ENCODE measurements at regions of chr2 and their contacts with region 1.

Region 1: DNA sequence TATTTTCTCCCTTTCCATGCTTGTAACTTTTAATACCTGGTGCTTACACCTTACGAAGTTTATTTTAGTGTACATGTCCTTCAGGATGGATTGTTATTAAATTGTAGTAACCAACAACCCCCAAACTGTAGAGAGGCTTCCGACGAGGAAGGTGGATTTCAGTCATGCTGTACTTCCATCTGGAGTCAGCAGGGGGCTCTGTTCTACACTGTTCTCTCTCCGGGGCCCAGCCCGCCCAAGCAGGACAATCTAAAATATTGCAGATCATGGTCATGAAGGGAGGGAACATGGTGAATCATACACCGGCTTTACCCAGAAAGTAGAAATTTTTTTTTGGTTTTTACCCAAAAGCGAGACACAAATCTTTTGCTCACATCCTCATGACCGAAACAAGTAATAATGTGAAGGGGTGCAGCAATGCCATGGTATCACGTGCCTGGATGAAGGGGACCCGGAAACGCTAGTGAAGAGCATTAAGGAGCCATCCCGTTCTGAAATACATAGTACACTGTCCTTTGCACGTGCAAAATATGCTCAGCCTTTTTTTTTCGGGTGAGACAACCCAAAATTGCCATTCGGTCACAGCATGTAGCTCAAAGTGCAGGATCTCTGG is 884.8 kb downstream of the EPHA4 start:
- DNase-seq: peak; percentile 37 to 78
- H3K4me3 ChIP-seq: no peak overlapping the region
- H3K4me1 ChIP-seq: no peaks in the 10 kb centered on the region; the same call in 1 of the 2 replicates
- H3K27me3 ChIP-seq: peaks cover 10% of the 10 kb centered on the region

Region 2: GRCh38 chr2:221573430-221574230 is 886.3 kb after region 1 on chr2:
- in situ Hi-C with region 1: loop called (anchors 5 kb)
- DNase-seq: peak; percentile 82 to 94
- H3K4me3 ChIP-seq: peak overlapping the region; percentile 79
- H3K4me1 ChIP-seq: peaks cover 21% of the 10 kb centered on the region
- H3K27me3 ChIP-seq: no peaks in the 10 kb centered on the region

Region 3: GRCh38 chr2:221969087-221969829 is 1281.9 kb after region 1 on chr2:
- in situ Hi-C with region 1: loop called (anchors 25 kb)
- DNase-seq: peak; percentile 58 to 66
- H3K4me3 ChIP-seq: no peak overlapping the region
- H3K4me1 ChIP-seq: peaks cover 12% of the 10 kb centered on the region
- H3K27me3 ChIP-seq: no peaks in the 10 kb centered on the region

Measured in HAP-1 (cell line).